Heart left ventricle (tissue), 16 donors: ENCODE measurements at regions of chr1 and their contacts with region 1.

Region 1: DNA sequence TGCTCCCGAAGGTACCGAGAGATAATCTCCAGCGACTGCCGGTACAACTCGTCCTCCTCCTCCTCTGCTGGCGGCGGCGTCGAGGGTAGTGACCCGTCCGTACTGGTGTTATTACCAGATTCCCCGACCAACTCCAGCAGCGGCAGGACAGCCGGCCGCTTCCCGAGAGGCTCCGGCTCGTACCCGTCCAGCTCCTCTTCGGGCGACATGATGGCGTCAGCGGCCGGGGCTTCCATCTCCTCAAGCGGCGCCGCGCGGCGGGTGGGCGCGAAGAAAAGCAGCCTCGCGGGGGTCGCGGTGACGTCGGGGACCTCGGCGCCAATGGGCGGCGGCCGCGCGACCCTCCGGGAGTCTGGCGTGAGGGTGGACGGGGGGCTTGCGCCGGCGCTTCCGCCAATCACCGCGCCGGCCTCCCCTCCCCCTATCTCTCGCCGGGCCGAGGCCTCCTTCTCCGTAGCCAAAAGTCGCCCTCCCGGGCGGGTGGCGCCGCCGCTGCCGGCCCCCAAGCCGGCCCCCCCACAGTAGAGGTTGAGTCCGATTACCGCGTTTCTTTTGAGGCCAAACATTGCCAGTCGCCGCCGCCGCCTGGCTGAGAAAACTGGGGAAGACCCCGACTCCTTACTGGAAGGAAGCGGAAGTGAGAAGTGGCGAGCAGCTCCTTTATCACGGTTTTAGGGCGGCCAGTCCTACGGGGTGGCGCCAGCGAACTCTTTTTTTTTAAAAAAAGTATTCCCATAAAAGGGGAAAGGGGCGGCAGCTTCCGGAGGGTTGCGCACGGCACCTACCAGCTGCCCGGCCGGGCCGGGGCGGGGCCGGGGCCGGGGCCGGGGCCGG is at the start of gene MCL1:
- DNase-seq: peak; percentile 94 to 96 (median 95)
- ATAC-seq: peak; percentile 80 to 94 (median 86)
- H3K4me3 ChIP-seq: peak within 1 kb of the TSS; percentile 80 to 99 (median 92)
- H3K27ac ChIP-seq: peak within 1 kb of the TSS; percentile 99 to 100 (median 100)
- H3K4me1 ChIP-seq: peaks cover 9 to 40% (median 26%) of the 10 kb centered on the region in 12 donors
- H3K27me3 ChIP-seq: no peaks in the 10 kb centered on the region
- CTCF ChIP-seq: peak in 2 of 12 donors; percentile 11 to 26
- POLR2A ChIP-seq: peak; percentile 63 to 96
- total RNA-seq, gene MCL1: 77.2 to 180 (median 104) TPM

Region 2: DNA sequence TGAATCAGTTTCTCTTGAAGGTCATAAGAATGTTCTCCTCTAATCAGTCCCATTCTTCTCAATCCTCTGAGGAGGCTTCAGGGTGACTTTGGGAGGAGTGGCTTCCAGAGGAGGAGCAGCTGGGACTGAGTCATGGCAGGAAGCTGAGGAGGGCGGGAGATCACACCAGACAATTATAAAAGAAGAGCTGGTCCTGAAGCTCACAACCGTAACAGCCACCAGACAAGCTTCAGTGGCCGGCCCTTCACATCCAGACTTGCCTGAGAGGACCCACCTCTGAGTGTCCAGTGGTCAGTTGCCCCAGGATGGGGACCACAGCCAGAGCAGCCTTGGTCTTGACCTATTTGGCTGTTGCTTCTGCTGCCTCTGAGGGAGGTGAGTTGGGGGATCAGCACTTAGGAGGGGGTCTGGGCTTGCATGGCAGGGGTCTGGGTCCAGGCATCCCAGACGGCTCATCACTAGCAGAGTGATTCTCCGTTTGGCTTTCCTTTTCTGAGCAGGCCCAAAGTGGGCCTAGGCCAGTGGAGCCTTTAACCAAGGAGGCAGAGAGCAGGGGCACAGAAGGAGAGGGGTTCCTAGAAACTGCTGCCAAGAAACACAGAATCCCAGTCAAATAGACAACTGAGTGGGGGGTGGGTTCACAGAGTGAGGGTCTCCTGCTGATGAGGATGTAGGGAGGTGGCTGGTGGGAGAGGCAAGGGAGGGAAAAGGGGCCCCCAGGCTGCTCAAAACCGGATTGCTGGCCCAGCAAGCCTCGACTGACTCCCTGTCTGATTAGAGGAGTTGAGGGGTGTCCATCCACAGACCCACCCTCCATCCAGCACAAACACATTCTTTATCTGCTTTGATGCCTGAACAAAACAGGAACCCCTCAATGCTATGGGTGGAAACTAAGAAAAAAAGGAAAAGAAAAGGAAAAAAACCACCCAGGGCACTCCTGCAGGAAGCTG is 71.0 kb before region 1 on chr1 and contains the start of gene ECM1:
- intact Hi-C with region 1: no loop called
- DNase-seq: peak in 4 of 5 donors; percentile 70 to 79 (median 75)
- ATAC-seq: peak; percentile 56 to 94 (median 88)
- H3K4me3 ChIP-seq: peak within 1 kb of the TSS in 11 of 12 donors; percentile 4 to 63 (median 47)
- H3K27ac ChIP-seq: peak within 1 kb of the TSS; percentile 57 to 90 (median 79)
- H3K4me1 ChIP-seq: peaks cover 0 to 31% (median 9%) of the 10 kb centered on the region in 12 donors
- H3K27me3 ChIP-seq: no peaks in the 10 kb centered on the region
- CTCF ChIP-seq: no peak
- POLR2A ChIP-seq: peak in 1 of 2 donors; percentile 70
- total RNA-seq, gene ECM1: 10.9 to 35.3 (median 15.4) TPM

Region 3: DNA sequence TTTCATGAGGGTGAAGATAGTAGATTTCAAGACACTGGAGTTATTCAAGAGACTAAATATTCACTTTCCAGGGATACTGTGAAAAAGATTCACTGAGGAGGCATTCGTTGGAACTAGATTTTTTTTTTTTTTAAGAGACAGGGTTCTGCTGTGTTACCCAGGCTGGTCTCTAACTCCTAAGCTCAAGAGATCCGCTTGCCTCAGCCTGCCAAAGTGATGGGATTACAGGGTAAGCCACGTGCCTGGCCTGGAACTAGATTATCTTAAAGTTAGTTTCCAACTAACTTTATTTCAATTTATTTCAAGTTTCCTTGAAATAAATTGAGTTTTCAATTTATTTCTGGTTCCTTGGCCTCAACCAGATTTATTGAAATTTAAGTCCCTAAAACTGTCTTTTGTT is 24.5 kb after region 1 on chr1:
- intact Hi-C with region 1: loop called in 1 of 10 experiments (anchors 2 kb)
- DNase-seq: no peak
- ATAC-seq: no peak
- H3K4me3 ChIP-seq: no peak overlapping the region
- H3K27ac ChIP-seq: peak overlapping the region in 9 of 12 donors; percentile 34 to 90 (median 81)
- H3K4me1 ChIP-seq: peaks cover 0 to 19% (median 11%) of the 10 kb centered on the region in 12 donors
- H3K27me3 ChIP-seq: no peaks in the 10 kb centered on the region
- CTCF ChIP-seq: no peak
- POLR2A ChIP-seq: no peak

Region 4: GRCh38 chr1:150613061-150613920 is 34.1 kb after region 1 on chr1:
- intact Hi-C with region 1: loop called in 4 of 10 experiments (anchors 2 to 5 kb)
- DNase-seq: peak in 3 of 5 donors; percentile 46 to 51 (median 51)
- ATAC-seq: peak; percentile 50 to 83 (median 78)
- H3K4me3 ChIP-seq: peak overlapping the region in 4 of 12 donors; percentile 6 to 33 (median 12)
- H3K27ac ChIP-seq: peak overlapping the region; percentile 69 to 99 (median 85)
- H3K4me1 ChIP-seq: peaks cover 10 to 82% (median 46%) of the 10 kb centered on the region in 12 donors
- H3K27me3 ChIP-seq: no peaks in the 10 kb centered on the region
- CTCF ChIP-seq: no peak
- POLR2A ChIP-seq: peak in 1 of 2 donors; percentile 32

Region 5: DNA sequence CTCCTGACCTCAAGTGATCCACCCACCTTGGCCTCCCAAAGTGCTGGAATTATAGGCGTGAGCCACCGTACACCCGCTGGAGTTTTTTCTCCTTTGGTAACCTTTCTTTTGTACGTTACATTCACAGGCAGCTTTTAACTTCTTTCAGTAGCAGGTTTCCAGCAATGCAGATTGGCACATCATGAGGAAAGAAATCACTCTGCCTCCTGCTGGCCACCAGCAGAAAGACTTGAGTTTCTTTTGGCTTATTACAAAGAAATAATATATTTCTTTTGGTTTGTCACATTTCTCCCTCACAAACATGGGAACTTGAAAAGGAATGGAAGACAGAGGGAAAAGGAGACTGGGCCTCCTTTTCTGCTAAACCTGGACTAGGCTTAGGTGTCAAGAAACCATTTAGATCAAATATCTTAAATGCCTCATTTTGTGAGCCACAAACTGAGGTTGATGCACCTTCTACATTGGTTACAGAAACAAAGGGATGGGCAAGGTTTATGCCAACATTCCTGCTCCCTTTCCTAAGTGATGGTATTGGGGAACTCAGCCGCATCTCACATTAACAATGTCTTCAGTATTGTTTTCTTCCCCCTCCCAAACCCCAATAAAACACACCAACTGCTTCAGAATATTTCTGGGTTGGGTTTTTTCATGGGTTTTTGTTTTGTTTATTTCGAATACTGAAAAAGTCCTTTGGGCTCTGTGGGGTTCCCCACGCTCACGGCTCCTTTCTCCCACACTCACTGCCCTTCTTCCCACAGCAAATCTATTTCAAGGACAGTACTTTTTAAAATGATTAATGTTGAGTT is 42.5 kb after region 1 on chr1:
- intact Hi-C with region 1: loop called in 7 of 10 experiments (anchors 1 to 5 kb)
- DNase-seq: peak in 3 of 5 donors; percentile 47 to 64 (median 53)
- ATAC-seq: peak in 2 of 4 donors; percentile 24 to 25
- H3K4me3 ChIP-seq: no peak overlapping the region
- H3K27ac ChIP-seq: peak overlapping the region; percentile 53 to 88 (median 70)
- H3K4me1 ChIP-seq: peaks cover 16 to 54% (median 43%) of the 10 kb centered on the region in 12 donors
- H3K27me3 ChIP-seq: no peaks in the 10 kb centered on the region
- CTCF ChIP-seq: peak; percentile 47 to 81 (median 71)
- POLR2A ChIP-seq: no peak

Region 6: GRCh38 chr1:150629115-150629928 is 50.1 kb after region 1 on chr1 and contains the start of gene ENSA:
- intact Hi-C with region 1: loop called in 4 of 10 experiments (anchors 5 kb)
- DNase-seq: peak; percentile 97 to 100 (median 98)
- ATAC-seq: peak; percentile 97 to 98 (median 97)
- H3K4me3 ChIP-seq: peak within 1 kb of the TSS; percentile 15 to 85 (median 70)
- H3K27ac ChIP-seq: peak within 1 kb of the TSS; percentile 85 to 99 (median 96)
- H3K4me1 ChIP-seq: peaks cover 3 to 35% (median 21%) of the 10 kb centered on the region in 12 donors
- H3K27me3 ChIP-seq: no peaks in the 10 kb centered on the region
- CTCF ChIP-seq: no peak
- POLR2A ChIP-seq: peak; percentile 82 to 85
- total RNA-seq, gene ENSA: 118 to 186 (median 130) TPM

Region 7: DNA sequence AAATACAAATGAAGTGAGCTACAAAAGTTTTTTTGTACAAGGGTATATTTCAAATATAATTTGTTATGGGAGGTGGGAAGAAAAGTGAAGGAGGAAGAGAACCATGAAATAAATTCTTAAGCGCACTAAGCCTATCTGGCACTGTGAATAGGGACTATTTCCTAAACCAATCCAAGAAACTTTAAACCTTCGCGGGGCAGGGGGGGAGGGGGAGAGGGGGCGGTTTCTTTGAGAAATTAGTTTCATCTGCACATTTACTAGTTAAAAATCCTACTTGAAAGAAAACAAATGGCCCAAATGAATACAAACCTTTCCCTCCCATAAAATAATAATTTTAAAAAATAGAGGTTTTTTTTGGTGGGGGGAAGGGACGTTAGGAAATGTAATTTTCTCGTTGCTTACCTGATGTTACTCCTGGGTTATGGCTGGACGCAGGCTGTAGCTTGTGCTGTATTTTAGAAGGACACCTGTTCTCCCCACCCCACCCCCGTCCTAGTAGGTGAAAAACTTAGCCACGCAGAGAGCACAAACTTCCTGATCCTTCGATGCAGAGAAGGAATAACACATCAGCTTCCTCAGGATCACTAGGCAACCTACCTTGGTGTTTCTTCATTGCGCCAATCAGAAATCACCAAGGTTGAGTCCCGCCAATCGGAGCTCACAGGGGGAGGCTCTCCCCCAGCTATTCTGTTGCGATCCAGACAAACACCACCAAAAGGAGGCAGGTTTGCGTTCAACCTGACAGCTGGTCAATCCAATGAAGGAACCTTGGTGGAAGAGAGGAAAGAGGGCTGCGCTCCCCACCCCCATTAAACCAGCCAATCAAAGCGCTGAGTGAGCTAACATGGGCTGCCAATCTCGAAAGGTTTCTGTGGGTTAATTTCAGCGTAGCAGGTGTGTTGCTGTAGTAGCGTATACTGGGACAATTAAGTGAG is 117.7 kb after region 1 on chr1 and contains the start of gene GOLPH3L:
- intact Hi-C with region 1: loop called in 1 of 10 experiments (anchors 5 kb)
- DNase-seq: peak; percentile 85 to 95 (median 95)
- ATAC-seq: peak; percentile 100
- H3K4me3 ChIP-seq: peak within 1 kb of the TSS; percentile 51 to 85 (median 73)
- H3K27ac ChIP-seq: peak within 1 kb of the TSS in 11 of 12 donors; percentile 32 to 78 (median 57)
- H3K4me1 ChIP-seq: peaks cover 0 to 24% (median 13%) of the 10 kb centered on the region in 12 donors
- H3K27me3 ChIP-seq: no peaks in the 10 kb centered on the region
- CTCF ChIP-seq: peak in 5 of 12 donors; percentile 18 to 52 (median 34)
- POLR2A ChIP-seq: peak in 1 of 2 donors; percentile 54
- total RNA-seq, gene GOLPH3L: 11.4 to 22.1 (median 14.7) TPM